ENCODE measurements at regions of chr3 and their contacts with region 1.

Region 1: GRCh38 chr3:50519471-50520089 is 16.1 kb upstream of the CACNA2D2 start:
- DNase-seq: peak; percentile 79
- H3K4me3 ChIP-seq: peak overlapping the region in 1 of 2 experiments; percentile 26; a peak in 1 of 4 replicates
- H3K27ac ChIP-seq: no peak overlapping the region
- H3K4me1 ChIP-seq: peaks cover 0 to 61% of the 10 kb centered on the region in 2 experiments; a peak in 2 of 4 replicates
- H3K27me3 ChIP-seq: peaks cover 21% of the 10 kb centered on the region; the same call in 1 of the 2 replicates
- CTCF ChIP-seq: peak; percentile 86
- EP300 ChIP-seq: no peak
- RAD21 ChIP-seq: peak; percentile 74

Region 2: GRCh38 chr3:50454481-50455070 is 65.0 kb before region 1 on chr3:
- CTCF ChIA-PET with region 1: no interaction called
- POLR2A ChIA-PET with region 1: no interaction called
- DNase-seq: peak; percentile 55
- H3K4me3 ChIP-seq: no peak overlapping the region
- H3K27ac ChIP-seq: no peak overlapping the region; a peak in 1 of 4 replicates
- H3K4me1 ChIP-seq: peaks cover 0 to 30% of the 10 kb centered on the region in 2 experiments; a peak in 1 of 4 replicates
- H3K27me3 ChIP-seq: peaks cover 11% of the 10 kb centered on the region; the same call in 1 of the 2 replicates
- CTCF ChIP-seq: no peak
- EP300 ChIP-seq: no peak
- RAD21 ChIP-seq: no peak

Region 3: DNA sequence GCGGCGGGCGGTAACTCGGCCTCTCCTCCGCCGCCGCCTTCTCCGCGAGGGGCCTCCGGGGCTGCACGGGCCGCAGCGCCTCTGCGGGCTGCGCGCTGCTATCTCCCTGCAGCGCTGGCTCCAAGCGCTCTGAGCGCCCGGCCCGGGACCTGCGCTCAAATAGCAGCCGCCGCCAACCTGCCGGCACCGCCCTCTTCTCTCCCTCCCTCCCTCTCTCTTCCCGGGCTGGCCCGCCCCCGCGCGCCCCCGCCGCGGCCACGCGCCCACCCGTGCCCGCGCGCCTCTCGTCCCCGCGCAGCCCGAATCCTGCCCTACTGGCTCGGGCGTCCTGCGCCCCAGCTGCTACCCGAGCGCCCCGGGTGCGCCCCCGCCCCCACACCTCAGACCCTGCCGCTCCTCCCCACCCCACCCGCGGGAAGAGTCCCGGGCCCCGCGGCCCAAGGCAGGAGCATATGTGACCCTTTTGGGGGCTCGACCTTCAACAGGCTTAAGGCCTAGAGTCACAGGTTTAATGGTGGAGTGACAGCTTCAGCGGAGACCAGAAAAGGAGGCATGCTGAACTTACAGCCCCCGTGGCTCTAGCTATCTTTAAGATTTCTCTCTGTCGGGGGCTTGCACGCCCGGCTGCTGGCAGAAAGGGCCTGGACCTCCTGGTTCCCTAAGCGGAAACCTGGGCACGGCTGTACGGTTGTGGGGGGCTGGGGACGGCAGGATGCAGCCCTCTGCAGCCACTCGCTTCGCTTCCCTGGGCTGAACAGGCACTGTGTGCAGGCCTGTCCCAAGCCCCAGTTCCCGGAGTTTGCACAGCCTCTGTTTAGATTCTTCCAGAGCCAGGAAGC is 15.9 kb before region 1 on chr3 and contains the start of gene CACNA2D2:
- CTCF ChIA-PET with region 1: interaction called, 20 read pairs
- POLR2A ChIA-PET with region 1: interaction called, 5 read pairs
- DNase-seq: peak; percentile 96
- H3K4me3 ChIP-seq: peak within 1 kb of the TSS in 1 of 2 experiments; percentile 58; a peak in 2 of 4 replicates
- H3K27ac ChIP-seq: peak within 1 kb of the TSS in 1 of 2 experiments; percentile 65; a peak in 2 of 4 replicates
- H3K4me1 ChIP-seq: peaks cover 0 to 40% of the 10 kb centered on the region in 2 experiments; a peak in 1 of 4 replicates
- H3K27me3 ChIP-seq: peaks cover 18% of the 10 kb centered on the region; the same call in 1 of the 2 replicates
- CTCF ChIP-seq: no peak
- EP300 ChIP-seq: no peak
- RAD21 ChIP-seq: no peak
- polyA plus RNA-seq, gene CACNA2D2: 1.1 and 2.8 TPM in 2 replicates

Region 4: DNA sequence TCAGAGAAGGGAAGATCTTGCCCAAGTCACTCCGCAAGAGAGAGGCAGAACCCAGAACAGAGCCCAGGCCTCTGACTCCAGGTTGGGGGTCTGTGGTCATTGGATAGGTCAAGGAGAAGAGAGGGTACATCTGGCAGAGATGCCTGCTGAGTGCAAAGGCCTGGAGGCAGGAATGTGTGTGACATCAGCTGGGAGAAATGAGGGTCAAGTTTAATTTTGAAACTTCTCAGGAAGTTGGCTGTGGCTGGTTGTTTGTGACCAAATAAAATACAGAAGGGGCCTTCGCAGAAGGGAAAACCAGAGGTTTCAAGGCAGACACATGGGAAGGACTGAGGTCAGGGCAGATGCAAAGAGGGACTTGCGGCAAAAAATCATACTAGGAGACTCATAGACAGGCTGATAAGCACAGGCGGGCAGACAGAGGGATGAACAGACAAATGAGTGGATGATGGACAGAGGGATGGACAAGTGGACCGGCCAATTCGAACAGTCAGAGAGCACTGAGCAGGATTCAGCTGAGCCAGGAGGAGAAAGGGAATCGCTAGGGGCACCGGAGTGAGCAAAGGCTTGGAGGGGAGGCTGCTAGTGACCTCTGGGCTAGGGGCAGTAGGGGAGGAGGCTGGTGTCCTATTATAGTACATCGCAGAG is 12.6 kb after region 1 on chr3:
- CTCF ChIA-PET with region 1: interaction called, 30 read pairs
- POLR2A ChIA-PET with region 1: no interaction called
- DNase-seq: no peak
- H3K4me3 ChIP-seq: no peak overlapping the region
- H3K27ac ChIP-seq: no peak overlapping the region
- H3K4me1 ChIP-seq: peaks cover 0 to 14% of the 10 kb centered on the region in 2 experiments; a peak in 1 of 4 replicates
- H3K27me3 ChIP-seq: peaks cover 12% of the 10 kb centered on the region
- CTCF ChIP-seq: no peak
- EP300 ChIP-seq: no peak
- RAD21 ChIP-seq: no peak

Region 5: DNA sequence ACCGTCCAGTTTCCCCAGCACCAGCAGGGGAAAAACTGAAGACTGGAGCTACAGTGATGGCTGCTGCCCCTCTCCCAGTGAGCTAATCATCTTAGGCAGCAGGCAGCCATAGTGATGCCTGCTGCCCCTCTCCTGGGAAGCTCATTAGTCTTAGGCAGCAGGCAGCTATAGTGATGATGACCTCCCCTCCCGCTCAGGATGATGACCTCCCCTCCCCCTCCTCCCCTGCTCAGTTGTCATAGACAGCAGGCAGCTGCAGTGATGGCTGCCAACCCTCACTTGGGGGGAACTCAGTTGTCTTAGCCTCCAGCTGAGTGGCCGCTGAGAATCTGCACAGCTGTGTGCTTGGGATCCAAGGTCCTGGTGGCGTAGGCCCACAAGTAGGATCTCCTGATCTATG is 784.6 kb after region 1 on chr3:
- CTCF ChIA-PET with region 1: no interaction called
- POLR2A ChIA-PET with region 1: no interaction called
- DNase-seq: no peak
- H3K4me3 ChIP-seq: no peak overlapping the region
- H3K27ac ChIP-seq: no peak overlapping the region
- H3K4me1 ChIP-seq: no peaks in the 10 kb centered on the region
- H3K27me3 ChIP-seq: no peaks in the 10 kb centered on the region
- CTCF ChIP-seq: no peak
- EP300 ChIP-seq: no peak
- RAD21 ChIP-seq: no peak